ENCODE measurements at regions of chr16 and their contacts with region 1.

Region 1: DNA sequence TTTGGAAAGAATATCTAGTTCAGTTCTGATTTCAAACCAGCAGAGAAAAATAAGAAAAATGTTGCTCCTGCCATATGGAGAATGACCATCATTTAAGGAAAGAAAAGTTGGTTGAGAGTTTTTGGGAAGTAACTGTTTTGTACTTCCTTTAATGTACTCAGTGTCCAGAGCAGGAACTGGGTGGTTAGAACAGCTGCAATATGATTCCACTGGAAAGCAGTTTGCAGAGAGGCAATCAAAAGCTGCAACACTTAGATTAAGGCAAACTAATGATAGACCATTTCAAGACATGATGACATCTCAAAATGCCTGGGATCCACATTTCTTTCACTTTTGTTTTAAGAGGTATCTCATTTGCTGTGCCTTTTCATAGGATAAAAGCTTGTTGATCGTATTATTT is 313.3 kb upstream of the HSBP1 start:
- DNase-seq: no peak
- H3K4me3 ChIP-seq: no peak overlapping the region
- H3K27ac ChIP-seq: no peak overlapping the region
- H3K4me1 ChIP-seq: no peaks in the 10 kb centered on the region
- H3K27me3 ChIP-seq: no peaks in the 10 kb centered on the region
- CTCF ChIP-seq: no peak
- EP300 ChIP-seq: no peak
- POLR2A ChIP-seq: no peak

Region 2: GRCh38 chr16:82400046-82400445 is 1094.4 kb before region 1 on chr16:
- intact Hi-C with region 1: loop called in 1 of 4 experiments (anchors 10 kb)
- DNase-seq: no peak
- H3K4me3 ChIP-seq: no peak overlapping the region
- H3K27ac ChIP-seq: no peak overlapping the region
- H3K4me1 ChIP-seq: no peaks in the 10 kb centered on the region
- H3K27me3 ChIP-seq: no peaks in the 10 kb centered on the region
- CTCF ChIP-seq: no peak
- EP300 ChIP-seq: no peak
- POLR2A ChIP-seq: no peak